ENCODE measurements at regions of chr2 and their contacts with region 1.

Region 1: DNA sequence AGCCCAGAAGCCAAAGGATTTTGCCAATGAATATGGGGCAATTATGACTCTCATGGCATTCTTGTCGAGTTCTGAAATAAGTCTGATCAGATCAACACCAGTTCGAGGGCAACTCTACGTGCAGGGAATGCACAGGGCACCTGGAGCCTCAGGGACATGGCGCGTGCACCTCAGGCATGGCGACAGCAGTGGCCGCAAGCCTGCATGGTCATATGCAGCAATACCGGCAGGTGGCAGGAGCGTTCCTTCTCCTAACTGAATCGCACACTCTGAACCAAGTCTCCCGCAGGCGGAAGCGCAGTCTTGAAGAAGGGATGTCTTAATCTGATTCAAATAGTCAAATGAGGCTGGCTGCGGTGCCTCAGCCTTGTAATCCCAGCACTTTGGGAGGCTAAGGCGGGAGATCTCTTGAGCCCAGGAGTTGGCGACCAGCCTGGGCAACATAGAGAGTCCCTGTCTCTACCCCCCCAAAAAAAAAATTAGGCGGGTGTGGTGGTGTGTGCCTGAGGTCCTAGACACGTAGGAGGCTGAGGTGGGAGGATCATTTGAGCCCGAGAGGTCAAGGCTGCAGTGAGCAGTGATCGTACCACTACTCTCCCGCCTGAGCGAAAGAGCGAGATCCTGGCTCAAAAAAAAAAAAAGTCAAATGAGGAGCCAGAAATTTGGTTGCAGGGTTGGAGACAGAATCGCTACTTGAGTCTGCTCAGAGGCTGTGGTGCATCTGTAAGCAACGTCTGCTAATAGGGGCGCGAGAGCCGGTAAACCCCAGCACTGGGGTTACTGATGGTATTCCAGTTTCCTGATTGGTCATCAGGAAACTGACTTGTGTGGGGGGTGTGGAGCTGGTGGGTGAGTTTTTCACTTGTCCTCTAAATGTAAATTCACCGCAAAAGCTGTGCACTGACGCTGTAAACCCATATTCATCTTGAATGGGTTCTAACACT is 28.8 kb downstream of the FHL2 start:
- DNase-seq: peak; percentile 83
- ATAC-seq: peak; percentile 99
- H3K4me3 ChIP-seq: no peak overlapping the region
- H3K4me3 Mint-ChIP-seq: no peak overlapping the region
- H3K27ac ChIP-seq: no peak overlapping the region
- H3K27ac Mint-ChIP-seq: no peak overlapping the region
- H3K4me1 ChIP-seq: peaks cover 0 to 3% of the 10 kb centered on the region in 2 donors
- H3K4me1 Mint-ChIP-seq: peaks cover 4% of the 10 kb centered on the region
- H3K27me3 ChIP-seq: no peaks in the 10 kb centered on the region
- H3K27me3 Mint-ChIP-seq: no peaks in the 10 kb centered on the region
- CTCF ChIP-seq: peak; percentile 89

Region 2: GRCh38 chr2:105398699-105399432 is 28.8 kb after region 1 on chr2 and contains the start of gene FHL2:
- CTCF ChIA-PET with region 1: interaction called, 3 read pairs
- POLR2A ChIA-PET with region 1: no interaction called
- intact Hi-C with region 1: loop called (anchors 1 kb)
- DNase-seq: peak; percentile 69
- ATAC-seq: peak; percentile 89
- H3K4me3 ChIP-seq: peak within 1 kb of the TSS in 4 of 5 experiments; percentile 25 to 71 (median 50)
- H3K4me3 Mint-ChIP-seq: peak within 1 kb of the TSS; percentile 74
- H3K27ac ChIP-seq: no peak within 1 kb of the TSS
- H3K27ac Mint-ChIP-seq: no peak within 1 kb of the TSS
- H3K4me1 ChIP-seq: peaks cover 10 to 14% of the 10 kb centered on the region in 2 donors
- H3K4me1 Mint-ChIP-seq: peaks cover 8% of the 10 kb centered on the region
- H3K27me3 ChIP-seq: peaks cover 0 to 46% (median 18%) of the 10 kb centered on the region in 4 experiments
- H3K27me3 Mint-ChIP-seq: peaks cover 57% of the 10 kb centered on the region
- CTCF ChIP-seq: peak; percentile 48
- total RNA-seq, gene FHL2: not detected in 2 replicates

Region 3: DNA sequence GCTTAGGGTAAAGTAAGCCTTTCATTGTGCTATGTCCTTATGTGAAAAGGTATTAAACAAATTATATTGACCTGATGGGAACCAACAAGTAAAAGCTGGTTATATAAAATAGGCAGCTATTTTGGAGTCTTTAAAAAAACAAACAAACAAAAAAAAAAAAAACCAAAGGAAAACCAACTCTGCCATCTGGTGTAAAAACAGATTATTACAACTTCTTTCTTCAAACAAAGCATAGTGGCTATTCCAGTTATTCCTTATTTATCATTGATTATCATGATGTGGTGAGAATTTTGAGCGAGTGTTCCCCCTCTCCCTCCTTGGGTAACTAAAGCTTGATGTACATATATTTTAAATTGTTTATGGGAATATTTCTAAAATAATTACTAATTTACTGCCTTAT is 151.2 kb after region 1 on chr2:
- CTCF ChIA-PET with region 1: interaction called, 7 read pairs
- POLR2A ChIA-PET with region 1: no interaction called
- intact Hi-C with region 1: loop called (anchors 1 kb)
- DNase-seq: no peak
- ATAC-seq: no peak
- H3K4me3 ChIP-seq: no peak overlapping the region
- H3K4me3 Mint-ChIP-seq: no peak overlapping the region
- H3K27ac ChIP-seq: no peak overlapping the region
- H3K27ac Mint-ChIP-seq: no peak overlapping the region
- H3K4me1 ChIP-seq: no peaks in the 10 kb centered on the region
- H3K4me1 Mint-ChIP-seq: no peaks in the 10 kb centered on the region
- H3K27me3 ChIP-seq: no peaks in the 10 kb centered on the region
- H3K27me3 Mint-ChIP-seq: peaks cover 4% of the 10 kb centered on the region
- CTCF ChIP-seq: peak; percentile 58

Region 4: GRCh38 chr2:105545730-105546627 is 176.0 kb after region 1 on chr2:
- CTCF ChIA-PET with region 1: interaction called, 6 read pairs
- POLR2A ChIA-PET with region 1: no interaction called
- intact Hi-C with region 1: loop called (anchors 1 kb)
- DNase-seq: peak; percentile 54
- ATAC-seq: no peak
- H3K4me3 ChIP-seq: no peak overlapping the region
- H3K4me3 Mint-ChIP-seq: no peak overlapping the region
- H3K27ac ChIP-seq: no peak overlapping the region
- H3K27ac Mint-ChIP-seq: no peak overlapping the region
- H3K4me1 ChIP-seq: peaks cover 0 to 4% of the 10 kb centered on the region in 2 donors
- H3K4me1 Mint-ChIP-seq: no peaks in the 10 kb centered on the region
- H3K27me3 ChIP-seq: no peaks in the 10 kb centered on the region
- H3K27me3 Mint-ChIP-seq: peaks cover 24% of the 10 kb centered on the region
- CTCF ChIP-seq: peak; percentile 91

Region 5: DNA sequence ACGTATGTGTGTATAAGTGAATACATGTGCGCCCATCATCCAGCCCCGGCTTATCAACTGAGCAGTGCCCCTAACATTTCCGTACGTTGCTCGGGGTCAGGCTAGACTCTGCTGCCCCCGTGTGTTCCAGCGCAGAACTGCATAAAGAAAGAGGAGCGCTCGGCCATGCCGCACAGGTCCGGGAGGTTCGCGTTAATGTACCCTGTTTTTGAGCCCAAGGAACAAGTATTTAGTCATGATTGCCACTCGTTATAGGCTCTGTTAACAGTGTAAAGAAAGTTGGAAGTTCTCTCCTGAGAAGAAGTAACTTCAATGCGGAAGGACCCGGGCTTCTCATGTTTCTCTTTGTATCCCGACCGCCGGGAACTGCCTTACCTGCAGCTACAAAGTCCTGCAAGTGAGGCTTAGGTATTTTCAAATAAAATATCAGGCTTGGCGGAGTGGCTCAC is 1172.8 kb after region 1 on chr2:
- CTCF ChIA-PET with region 1: interaction called, 5 read pairs
- POLR2A ChIA-PET with region 1: no interaction called
- intact Hi-C with region 1: loop called (anchors 2 kb)
- DNase-seq: peak; percentile 76
- ATAC-seq: peak; percentile 99
- H3K4me3 ChIP-seq: peak overlapping the region in 2 of 5 experiments; percentile 23 to 32
- H3K4me3 Mint-ChIP-seq: peak overlapping the region; percentile 73
- H3K27ac ChIP-seq: no peak overlapping the region
- H3K27ac Mint-ChIP-seq: no peak overlapping the region
- H3K4me1 ChIP-seq: peaks cover 3 to 4% of the 10 kb centered on the region in 2 donors
- H3K4me1 Mint-ChIP-seq: peaks cover 3% of the 10 kb centered on the region
- H3K27me3 ChIP-seq: peaks cover 0 to 16% (median 0%) of the 10 kb centered on the region in 4 experiments
- H3K27me3 Mint-ChIP-seq: peaks cover 40% of the 10 kb centered on the region
- CTCF ChIP-seq: peak; percentile 99

Region 6: GRCh38 chr2:106582148-106583143 is 1212.4 kb after region 1 on chr2:
- CTCF ChIA-PET with region 1: interaction called, 13 read pairs
- POLR2A ChIA-PET with region 1: no interaction called
- intact Hi-C with region 1: no loop called
- DNase-seq: peak; percentile 64
- ATAC-seq: peak; percentile 80
- H3K4me3 ChIP-seq: peak overlapping the region; percentile 26 to 66 (median 56)
- H3K4me3 Mint-ChIP-seq: peak overlapping the region; percentile 94
- H3K27ac ChIP-seq: no peak overlapping the region
- H3K27ac Mint-ChIP-seq: peak overlapping the region; percentile 62
- H3K4me1 ChIP-seq: peaks cover 9% of the 10 kb centered on the region in 2 donors
- H3K4me1 Mint-ChIP-seq: peaks cover 12% of the 10 kb centered on the region
- H3K27me3 ChIP-seq: peaks cover 0 to 22% (median 4%) of the 10 kb centered on the region in 4 experiments
- H3K27me3 Mint-ChIP-seq: peaks cover 48% of the 10 kb centered on the region
- CTCF ChIP-seq: peak; percentile 97